ENCODE measurements at regions of chr2 and their contacts with region 1.

Region 1: GRCh38 chr2:187581125-187581896 is 27.1 kb upstream of the TFPI start:
- DNase-seq: peak; percentile 77
- H3K4me3 Mint-ChIP-seq: peak overlapping the region; percentile 58
- H3K27ac Mint-ChIP-seq: peak overlapping the region; percentile 81
- H3K4me1 Mint-ChIP-seq: peaks cover 9% of the 10 kb centered on the region
- H3K27me3 Mint-ChIP-seq: no peaks in the 10 kb centered on the region
- CTCF ChIP-seq: peak; percentile 76

Region 2: GRCh38 chr2:186862869-186863709 is 718.2 kb before region 1 on chr2:
- CTCF ChIA-PET with region 1: no interaction called
- POLR2A ChIA-PET with region 1: no interaction called
- intact Hi-C with region 1: loop called (anchors 10 kb)
- DNase-seq: peak; percentile 57
- H3K4me3 Mint-ChIP-seq: no peak overlapping the region
- H3K27ac Mint-ChIP-seq: no peak overlapping the region
- H3K4me1 Mint-ChIP-seq: no peaks in the 10 kb centered on the region
- H3K27me3 Mint-ChIP-seq: no peaks in the 10 kb centered on the region
- CTCF ChIP-seq: peak; percentile 74

Region 3: GRCh38 chr2:187442378-187442777 is 138.9 kb before region 1 on chr2:
- CTCF ChIA-PET with region 1: no interaction called
- POLR2A ChIA-PET with region 1: no interaction called
- intact Hi-C with region 1: no loop called
- DNase-seq: no peak
- H3K4me3 Mint-ChIP-seq: no peak overlapping the region
- H3K27ac Mint-ChIP-seq: no peak overlapping the region
- H3K4me1 Mint-ChIP-seq: no peaks in the 10 kb centered on the region
- H3K27me3 Mint-ChIP-seq: no peaks in the 10 kb centered on the region
- CTCF ChIP-seq: no peak

Region 4: GRCh38 chr2:187509667-187510417 is 71.5 kb before region 1 on chr2:
- CTCF ChIA-PET with region 1: interaction called, 363 read pairs
- POLR2A ChIA-PET with region 1: interaction called, 4 read pairs
- intact Hi-C with region 1: no loop called
- DNase-seq: no peak
- H3K4me3 Mint-ChIP-seq: no peak overlapping the region
- H3K27ac Mint-ChIP-seq: no peak overlapping the region
- H3K4me1 Mint-ChIP-seq: no peaks in the 10 kb centered on the region
- H3K27me3 Mint-ChIP-seq: no peaks in the 10 kb centered on the region
- CTCF ChIP-seq: no peak

Region 5: DNA sequence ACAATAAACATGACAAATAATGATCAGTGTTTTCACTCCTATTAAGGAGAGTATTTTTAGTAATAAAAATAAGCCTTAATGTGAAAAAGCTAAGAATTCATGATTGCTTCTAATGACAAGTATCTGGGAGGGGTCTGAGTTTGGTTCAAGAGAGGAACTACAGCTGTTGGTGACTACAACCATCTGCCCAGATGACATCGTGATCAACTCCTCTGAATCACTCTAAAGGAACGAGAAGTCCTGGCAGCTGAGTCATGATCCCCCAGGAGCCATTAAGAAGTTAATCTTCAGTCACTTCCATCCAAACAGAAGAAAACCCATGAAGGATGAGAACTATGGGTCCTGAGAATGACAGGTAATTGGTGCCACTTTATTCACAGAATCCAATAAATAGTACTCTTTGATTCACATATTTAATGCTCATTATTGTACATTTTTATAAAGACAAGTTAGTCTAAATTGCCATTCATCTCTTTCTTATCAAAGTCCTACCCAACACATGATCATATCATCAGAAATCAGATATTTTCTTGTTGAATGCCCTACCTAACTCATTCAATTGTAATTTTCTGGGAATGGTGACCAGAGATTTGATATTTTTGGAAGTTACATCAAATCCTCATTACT is 33.8 kb before region 1 on chr2:
- CTCF ChIA-PET with region 1: interaction called, 22 read pairs
- POLR2A ChIA-PET with region 1: interaction called, 6 read pairs
- intact Hi-C with region 1: no loop called
- DNase-seq: peak; percentile 88
- H3K4me3 Mint-ChIP-seq: peak overlapping the region; percentile 16
- H3K27ac Mint-ChIP-seq: peak overlapping the region; percentile 98
- H3K4me1 Mint-ChIP-seq: peaks cover 49% of the 10 kb centered on the region
- H3K27me3 Mint-ChIP-seq: no peaks in the 10 kb centered on the region
- CTCF ChIP-seq: no peak

Region 6: DNA sequence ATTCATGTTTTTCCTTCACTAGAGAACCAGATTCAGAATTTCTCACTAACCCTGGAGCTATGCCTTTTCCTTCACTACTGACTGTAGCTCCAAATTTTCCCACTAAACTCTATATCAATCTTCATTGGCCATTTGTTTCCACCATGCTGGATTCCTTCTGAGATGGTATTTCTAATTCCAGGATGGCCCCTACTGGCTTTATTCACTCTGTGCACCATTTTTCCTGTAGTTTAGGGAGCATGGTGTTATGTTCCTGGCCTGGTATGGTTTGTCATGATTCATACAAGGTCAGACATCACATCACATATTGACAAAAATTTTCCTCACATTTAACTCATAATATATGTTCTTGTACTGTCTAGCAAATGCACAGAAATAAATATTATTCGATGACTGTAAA is 202.1 kb after region 1 on chr2:
- CTCF ChIA-PET with region 1: interaction called, 10 read pairs
- POLR2A ChIA-PET with region 1: no interaction called
- intact Hi-C with region 1: no loop called
- DNase-seq: peak; percentile 9
- H3K4me3 Mint-ChIP-seq: no peak overlapping the region
- H3K27ac Mint-ChIP-seq: peak overlapping the region; percentile 1
- H3K4me1 Mint-ChIP-seq: no peaks in the 10 kb centered on the region
- H3K27me3 Mint-ChIP-seq: no peaks in the 10 kb centered on the region
- CTCF ChIP-seq: no peak

Region 7: DNA sequence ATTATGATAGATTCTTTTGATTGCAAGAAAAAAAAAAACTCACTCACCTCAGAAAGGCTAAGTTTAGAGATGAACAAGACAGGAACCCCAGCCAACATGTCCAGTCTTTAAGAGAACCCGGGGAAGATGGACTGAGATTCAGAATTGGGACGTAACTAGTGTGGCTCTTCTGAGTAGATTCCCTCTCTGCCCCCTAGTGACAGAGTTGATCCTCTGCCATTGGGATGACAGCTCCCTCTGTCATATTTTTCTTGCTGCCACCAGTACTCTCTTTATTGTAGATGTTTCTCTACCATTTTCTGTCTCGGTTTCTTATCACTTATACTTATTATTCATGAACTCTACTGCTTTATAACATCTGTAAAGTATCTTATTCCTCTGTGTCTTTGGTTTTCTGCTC is 788.1 kb after region 1 on chr2:
- CTCF ChIA-PET with region 1: interaction called, 9 read pairs
- POLR2A ChIA-PET with region 1: no interaction called
- intact Hi-C with region 1: loop called (anchors 1 kb)
- DNase-seq: peak; percentile 73
- H3K4me3 Mint-ChIP-seq: no peak overlapping the region
- H3K27ac Mint-ChIP-seq: no peak overlapping the region
- H3K4me1 Mint-ChIP-seq: no peaks in the 10 kb centered on the region
- H3K27me3 Mint-ChIP-seq: no peaks in the 10 kb centered on the region
- CTCF ChIP-seq: peak; percentile 59

Region 8: GRCh38 chr2:189412330-189412953 is 1831.1 kb after region 1 on chr2:
- CTCF ChIA-PET with region 1: interaction called, 3 read pairs
- POLR2A ChIA-PET with region 1: no interaction called
- intact Hi-C with region 1: loop called (anchors 1 kb)
- DNase-seq: peak; percentile 61
- H3K4me3 Mint-ChIP-seq: peak overlapping the region; percentile 43
- H3K27ac Mint-ChIP-seq: peak overlapping the region; percentile 29
- H3K4me1 Mint-ChIP-seq: peaks cover 17% of the 10 kb centered on the region
- H3K27me3 Mint-ChIP-seq: no peaks in the 10 kb centered on the region
- CTCF ChIP-seq: peak; percentile 77

Measured in MCF 10A (cell line).